ENCODE measurements at regions of chr3 and their contacts with region 1.

Region 1: DNA sequence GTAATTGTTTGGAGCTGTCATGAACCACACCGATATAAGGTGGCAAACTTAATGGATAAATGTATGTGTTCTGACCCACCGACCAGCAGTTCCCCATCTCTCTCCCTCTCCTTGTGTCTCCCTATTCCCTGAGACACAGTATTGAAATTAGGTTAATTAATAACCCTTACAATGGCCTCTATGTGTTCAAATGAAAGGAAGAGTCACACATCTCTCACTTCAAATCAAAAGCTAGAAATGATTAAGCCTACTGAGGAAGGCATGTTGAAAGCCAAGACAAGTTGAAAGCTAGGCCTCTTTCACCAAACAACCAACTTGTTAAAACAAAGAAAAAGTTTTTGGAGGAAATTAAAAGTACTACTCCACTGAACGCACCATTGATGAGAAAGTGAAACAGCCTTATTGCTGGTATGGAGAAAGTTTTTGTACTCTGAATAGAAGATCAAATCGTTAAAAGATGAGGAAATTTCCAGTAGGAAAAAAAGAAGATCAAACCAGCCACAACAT is 15.0 kb downstream of the ATR start:
- DNase-seq: no peak
- ATAC-seq: no peak
- H3K4me3 Mint-ChIP-seq: no peak overlapping the region
- H3K27ac Mint-ChIP-seq: no peak overlapping the region
- H3K4me1 Mint-ChIP-seq: no peaks in the 10 kb centered on the region
- H3K27me3 Mint-ChIP-seq: no peaks in the 10 kb centered on the region
- CTCF ChIP-seq: no peak

Region 2: GRCh38 chr3:142148792-142149672 is 414.5 kb before region 1 on chr3 and contains the start of gene TFDP2:
- CTCF ChIA-PET with region 1: no interaction called
- POLR2A ChIA-PET with region 1: no interaction called
- intact Hi-C with region 1: no loop called
- DNase-seq: peak; percentile 78
- ATAC-seq: peak; percentile 99
- H3K4me3 Mint-ChIP-seq: peak within 1 kb of the TSS; percentile 86
- H3K27ac Mint-ChIP-seq: peak within 1 kb of the TSS; percentile 72
- H3K4me1 Mint-ChIP-seq: peaks cover 14% of the 10 kb centered on the region
- H3K27me3 Mint-ChIP-seq: no peaks in the 10 kb centered on the region
- CTCF ChIP-seq: no peak
- total RNA-seq, gene TFDP2: 20.0 and 23.1 TPM in 2 replicates

Region 3: GRCh38 chr3:142523921-142524566 is 39.5 kb before region 1 on chr3:
- CTCF ChIA-PET with region 1: no interaction called
- POLR2A ChIA-PET with region 1: no interaction called
- intact Hi-C with region 1: loop called (anchors 5 kb)
- DNase-seq: no peak
- ATAC-seq: no peak
- H3K4me3 Mint-ChIP-seq: no peak overlapping the region
- H3K27ac Mint-ChIP-seq: no peak overlapping the region
- H3K4me1 Mint-ChIP-seq: no peaks in the 10 kb centered on the region
- H3K27me3 Mint-ChIP-seq: no peaks in the 10 kb centered on the region
- CTCF ChIP-seq: no peak

Region 4: DNA sequence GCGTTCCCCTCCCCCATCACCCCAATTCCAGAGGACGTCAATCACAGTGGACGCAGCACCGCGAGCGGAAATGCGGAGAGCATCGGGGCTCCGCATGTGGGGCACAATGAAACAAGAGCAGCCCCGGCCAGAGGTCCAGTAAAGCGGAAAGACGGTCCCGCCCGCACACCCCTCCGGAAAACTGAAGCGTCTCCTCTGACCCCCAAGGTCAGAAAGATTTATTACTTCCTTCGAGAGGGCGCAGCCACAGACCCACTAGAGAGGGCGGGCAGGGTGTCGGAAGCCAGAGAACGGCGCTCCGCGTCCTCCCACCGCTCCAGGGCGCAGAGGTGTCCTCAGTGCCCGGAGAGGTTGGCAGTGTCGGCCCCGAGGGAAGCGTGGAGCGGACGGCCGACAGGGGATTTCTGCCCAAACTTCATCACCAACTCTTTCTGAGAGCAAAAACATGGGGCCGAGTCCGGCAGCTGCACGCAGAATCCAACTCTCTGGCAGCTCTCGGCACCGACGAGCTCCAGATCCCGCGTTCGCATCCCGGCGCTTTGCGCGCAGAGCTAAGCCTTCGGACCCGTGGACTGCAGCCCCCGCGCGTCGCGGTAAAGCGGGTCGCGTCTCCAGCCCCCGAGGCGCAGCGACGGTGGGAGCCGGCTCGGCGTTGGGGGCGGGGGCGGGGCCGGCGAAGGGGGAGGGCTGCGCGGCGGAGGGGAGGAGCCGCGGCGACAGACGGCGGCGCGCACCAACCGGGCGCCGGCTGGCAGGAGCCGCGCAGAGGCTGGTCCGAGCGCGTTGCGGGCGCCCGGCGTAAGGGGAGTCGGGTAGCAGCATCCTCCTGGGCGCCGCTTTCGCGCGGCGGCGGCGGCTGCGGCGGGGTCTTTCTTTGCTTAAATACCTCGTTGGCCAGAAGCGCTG is 555.7 kb after region 1 on chr3 and contains the start of gene CHST2:
- CTCF ChIA-PET with region 1: no interaction called
- POLR2A ChIA-PET with region 1: no interaction called
- intact Hi-C with region 1: no loop called
- DNase-seq: peak; percentile 77
- ATAC-seq: peak; percentile 89
- H3K4me3 Mint-ChIP-seq: peak within 1 kb of the TSS; percentile 90
- H3K27ac Mint-ChIP-seq: peak within 1 kb of the TSS; percentile 78
- H3K4me1 Mint-ChIP-seq: peaks cover 32% of the 10 kb centered on the region
- H3K27me3 Mint-ChIP-seq: no peaks in the 10 kb centered on the region
- CTCF ChIP-seq: no peak
- total RNA-seq, gene CHST2: 11.8 and 12.3 TPM in 2 replicates